ENCODE measurements at regions of chr9 and their contacts with region 1.

Region 1: GRCh38 chr9:928362-929042 is 48.0 kb upstream of the DMRT3 start:
- DNase-seq: peak; percentile 53
- ATAC-seq: peak; percentile 97
- H3K4me3 Mint-ChIP-seq: no peak overlapping the region
- H3K27ac Mint-ChIP-seq: no peak overlapping the region
- H3K4me1 Mint-ChIP-seq: no peaks in the 10 kb centered on the region
- H3K27me3 Mint-ChIP-seq: no peaks in the 10 kb centered on the region; the same call in 1 of the 2 replicates
- CTCF ChIP-seq: peak; percentile 37; the same call in 1 of the 2 replicates

Region 2: DNA sequence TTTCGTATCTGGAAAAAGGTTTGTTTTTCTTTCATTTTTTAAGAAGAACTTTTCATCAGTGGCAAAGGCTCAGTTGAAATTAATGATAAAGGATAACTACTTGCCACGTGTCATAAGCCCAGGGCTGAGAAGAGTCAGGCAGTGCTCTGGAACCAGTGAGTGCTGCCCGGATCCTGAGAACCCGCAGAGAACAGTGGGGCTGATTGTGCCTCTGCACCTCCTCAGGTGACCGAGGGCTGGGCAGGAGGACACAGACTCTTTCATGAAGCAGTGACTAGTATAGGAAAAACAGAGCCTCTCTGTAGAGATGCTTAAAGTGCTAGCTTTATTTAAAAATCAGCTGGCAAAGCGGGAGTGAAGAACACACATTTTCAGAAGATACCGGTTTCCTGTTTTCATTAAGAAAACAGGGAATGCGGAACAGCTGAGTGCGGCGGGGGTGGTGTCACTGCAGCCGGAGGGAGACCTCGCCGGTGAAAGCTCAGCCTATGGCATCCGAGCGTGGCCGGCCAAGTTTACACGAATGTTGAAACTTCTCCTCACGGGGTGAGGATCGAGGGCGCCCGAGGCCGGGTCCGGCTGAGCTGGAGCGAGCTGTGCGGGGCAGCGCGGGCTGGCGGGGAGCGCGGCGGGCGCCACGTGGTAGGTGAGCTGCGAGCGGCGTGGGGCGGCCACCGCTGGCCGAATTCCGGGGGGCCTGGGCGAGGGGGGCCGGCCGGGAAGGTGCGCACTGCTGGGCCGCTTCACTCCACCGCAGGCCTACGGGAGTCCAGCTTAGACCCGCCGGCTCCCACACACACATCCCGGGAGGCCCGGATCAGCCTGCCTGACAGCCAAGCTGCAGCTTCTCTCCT is 221.7 kb before region 1 on chr9:
- CTCF ChIA-PET with region 1: no interaction called
- POLR2A ChIA-PET with region 1: no interaction called
- DNase-seq: peak; percentile 64
- ATAC-seq: peak; percentile 83
- H3K4me3 Mint-ChIP-seq: peak overlapping the region; percentile 70
- H3K27ac Mint-ChIP-seq: peak overlapping the region; percentile 73
- H3K4me1 Mint-ChIP-seq: peaks cover 26% of the 10 kb centered on the region
- H3K27me3 Mint-ChIP-seq: no peaks in the 10 kb centered on the region
- CTCF ChIP-seq: no peak

Region 3: GRCh38 chr9:899440-900184 is 28.9 kb before region 1 on chr9:
- CTCF ChIA-PET with region 1: interaction called, 19 read pairs
- POLR2A ChIA-PET with region 1: interaction called, 6 read pairs
- DNase-seq: no peak
- ATAC-seq: peak; percentile 78
- H3K4me3 Mint-ChIP-seq: no peak overlapping the region
- H3K27ac Mint-ChIP-seq: no peak overlapping the region
- H3K4me1 Mint-ChIP-seq: peaks cover 36% of the 10 kb centered on the region
- H3K27me3 Mint-ChIP-seq: peaks cover 2% of the 10 kb centered on the region; the same call in 1 of the 2 replicates
- CTCF ChIP-seq: no peak

Region 4: GRCh38 chr9:950139-950538 is 21.6 kb after region 1 on chr9:
- CTCF ChIA-PET with region 1: interaction called, 14 read pairs
- POLR2A ChIA-PET with region 1: no interaction called
- DNase-seq: no peak
- ATAC-seq: no peak; the same call in 1 of the 2 replicates
- H3K4me3 Mint-ChIP-seq: no peak overlapping the region
- H3K27ac Mint-ChIP-seq: no peak overlapping the region
- H3K4me1 Mint-ChIP-seq: peaks cover 8% of the 10 kb centered on the region
- H3K27me3 Mint-ChIP-seq: no peaks in the 10 kb centered on the region
- CTCF ChIP-seq: no peak

Region 5: DNA sequence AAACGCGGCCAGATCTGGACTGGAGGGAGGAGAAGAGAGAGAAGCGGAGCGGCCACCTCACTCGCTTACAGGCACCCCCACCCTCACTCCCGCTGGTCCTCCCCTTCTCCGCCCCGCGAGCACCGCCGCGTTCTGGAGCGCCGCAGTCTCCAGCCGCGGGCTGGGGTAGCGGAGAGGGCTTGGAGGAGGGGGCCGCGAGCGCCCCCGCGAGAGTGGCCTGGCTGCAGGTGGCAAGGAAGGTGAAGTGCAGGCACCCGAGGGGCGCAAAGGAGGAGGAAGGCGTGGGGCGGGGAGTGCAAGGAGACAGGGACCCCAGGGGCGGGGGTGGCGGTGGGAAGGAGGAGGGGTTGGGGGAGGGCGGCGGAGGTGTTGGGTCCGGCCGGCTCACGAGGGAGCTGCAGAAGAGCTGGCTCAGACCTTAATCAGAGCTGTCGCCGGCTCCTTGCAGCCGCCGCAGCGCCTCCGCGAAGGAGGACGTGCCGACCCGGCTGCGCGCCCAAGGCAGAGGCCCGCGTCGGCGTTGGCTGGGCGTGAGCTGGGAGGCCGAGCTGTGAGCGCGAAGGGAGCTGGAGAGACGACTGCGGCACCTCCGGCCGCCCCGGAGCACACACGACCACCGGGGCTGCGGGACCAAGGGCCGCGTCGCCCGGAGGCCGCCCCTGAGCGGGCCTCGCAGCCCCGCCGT is 47.9 kb after region 1 on chr9 and contains the start of gene DMRT3:
- CTCF ChIA-PET with region 1: interaction called, 14 read pairs
- POLR2A ChIA-PET with region 1: no interaction called
- DNase-seq: peak; percentile 79
- ATAC-seq: peak; percentile 14
- H3K4me3 Mint-ChIP-seq: peak within 1 kb of the TSS; percentile 61
- H3K27ac Mint-ChIP-seq: no peak within 1 kb of the TSS
- H3K4me1 Mint-ChIP-seq: peaks cover 53% of the 10 kb centered on the region
- H3K27me3 Mint-ChIP-seq: peaks cover 98% of the 10 kb centered on the region
- CTCF ChIP-seq: no peak
- total RNA-seq, gene DMRT3: not detected in 3 replicates

Measured in WTC11 (cell line).